Stomach (tissue), 19 donors: ENCODE measurements at regions of chr4 and their contacts with region 1.

Region 1: GRCh38 chr4:155353923-155354540 is 22.7 kb downstream of the MAP9 start:
- DNase-seq: peak; percentile 71 to 86
- H3K4me3 ChIP-seq: no peak overlapping the region
- H3K27ac ChIP-seq: no peak overlapping the region
- H3K4me1 ChIP-seq: peaks cover 0 to 8% (median 0%) of the 10 kb centered on the region in 4 donors
- H3K27me3 ChIP-seq: no peaks in the 10 kb centered on the region
- CTCF ChIP-seq: peak in 5 of 7 experiments; percentile 7 to 62 (median 57)
- EP300 ChIP-seq: no peak
- POLR2A ChIP-seq: no peak

Region 2: DNA sequence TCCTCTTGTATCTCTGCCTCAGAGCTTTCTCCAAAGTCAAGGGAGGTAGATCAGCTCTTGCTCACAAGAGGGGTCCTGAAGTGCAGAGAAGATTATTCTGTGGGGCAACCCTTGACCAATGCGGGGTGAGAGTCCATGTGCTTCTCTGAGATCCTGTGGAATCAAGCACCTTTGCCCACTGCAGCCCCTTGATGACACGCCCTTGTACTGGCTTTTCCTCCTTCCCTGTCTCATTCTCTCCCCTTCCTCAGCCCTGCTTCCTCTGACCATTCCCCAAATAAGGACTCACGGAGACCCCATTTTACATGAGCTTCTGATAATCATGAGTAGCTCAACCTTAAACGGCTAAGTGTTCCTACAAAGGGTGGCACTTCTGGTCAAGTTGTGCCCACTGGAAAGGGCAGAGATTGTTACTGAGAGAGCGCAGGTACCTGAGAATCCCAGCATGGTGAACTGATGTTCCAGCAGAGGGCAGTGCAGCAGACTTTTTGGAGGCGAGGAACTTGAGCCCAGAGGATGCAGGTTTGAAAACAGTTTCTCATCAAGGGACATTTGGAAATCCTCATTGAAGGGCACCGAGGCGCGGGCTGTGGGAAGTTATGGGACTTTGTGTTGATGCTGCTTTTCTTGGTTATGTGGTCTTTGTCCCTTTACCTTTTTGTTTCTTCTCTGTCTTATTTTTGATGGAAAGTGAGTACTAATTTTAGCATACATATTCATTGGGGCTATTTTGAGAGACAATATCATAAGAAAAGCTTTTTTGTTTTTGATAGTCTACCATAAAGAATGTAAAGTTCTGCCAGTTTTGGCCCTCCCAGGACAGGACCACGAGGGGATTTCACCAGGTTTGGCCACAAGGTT is 371.6 kb before region 1 on chr4:
- intact Hi-C with region 1: loop called (anchors 10 kb)
- DNase-seq: peak; percentile 74 to 85
- H3K4me3 ChIP-seq: no peak overlapping the region
- H3K27ac ChIP-seq: no peak overlapping the region
- H3K4me1 ChIP-seq: no peaks in the 10 kb centered on the region
- H3K27me3 ChIP-seq: no peaks in the 10 kb centered on the region
- CTCF ChIP-seq: peak in 5 of 7 experiments; percentile 43 to 72 (median 57)
- EP300 ChIP-seq: no peak
- POLR2A ChIP-seq: no peak